Keratinocyte (primary cell): ENCODE measurements at regions of chr9 and their contacts with region 1.

Region 1: DNA sequence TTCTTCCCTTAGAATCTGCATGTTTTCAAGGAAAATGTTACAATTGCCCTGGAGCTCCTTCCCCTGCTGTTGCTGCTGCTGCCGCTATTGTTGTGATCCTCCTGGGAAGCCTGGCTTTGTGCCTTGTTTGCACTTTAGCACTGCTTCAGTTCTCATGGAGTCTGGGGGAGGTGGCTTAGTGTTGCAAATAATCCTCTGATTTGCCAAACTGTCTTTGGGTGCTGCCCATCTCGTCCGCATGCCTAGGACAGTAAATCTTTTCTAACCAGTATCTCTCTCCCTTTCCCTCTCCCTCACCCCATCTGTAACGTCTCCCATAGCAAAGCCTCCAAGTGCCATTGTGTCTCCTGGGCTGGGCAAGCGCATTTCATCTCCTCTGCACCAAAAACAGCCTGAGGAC is 30.3 kb downstream of the FAM240B start:
- DNase-seq: no peak
- H3K4me3 ChIP-seq: no peak overlapping the region
- H3K27ac ChIP-seq: no peak overlapping the region
- H3K4me1 ChIP-seq: no peaks in the 10 kb centered on the region
- H3K27me3 ChIP-seq: no peaks in the 10 kb centered on the region
- CTCF ChIP-seq: no peak

Region 2: DNA sequence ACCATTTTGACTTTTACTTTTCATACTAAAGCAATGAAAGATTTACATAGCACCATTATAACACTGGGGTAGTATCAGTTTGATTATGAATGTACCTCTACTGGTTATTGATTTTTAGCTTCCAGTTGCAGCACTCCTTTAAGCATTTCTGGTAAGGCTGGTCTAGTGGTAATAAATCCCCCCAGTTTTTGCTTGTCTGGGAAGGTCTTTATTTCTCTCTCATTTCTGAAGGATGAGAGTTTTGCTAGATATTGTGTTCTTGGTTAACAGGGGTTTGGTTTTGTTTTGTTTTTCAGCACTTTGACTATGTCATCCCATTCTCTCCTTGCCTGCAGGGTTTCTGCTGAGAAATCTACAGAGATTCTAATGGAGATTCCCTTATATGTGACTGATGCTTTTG is 238.5 kb before region 1 on chr9:
- dilution Hi-C with region 1: loop called (anchors 10 kb)
- DNase-seq: no peak
- H3K4me3 ChIP-seq: no peak overlapping the region
- H3K27ac ChIP-seq: no peak overlapping the region
- H3K4me1 ChIP-seq: no peaks in the 10 kb centered on the region
- H3K27me3 ChIP-seq: no peaks in the 10 kb centered on the region
- CTCF ChIP-seq: no peak